Activated B cell treated with CpG ODN at 0.5 μM for 24 hours (primary cell): ENCODE measurements at regions of chr12 and their contacts with region 1.

Region 1: DNA sequence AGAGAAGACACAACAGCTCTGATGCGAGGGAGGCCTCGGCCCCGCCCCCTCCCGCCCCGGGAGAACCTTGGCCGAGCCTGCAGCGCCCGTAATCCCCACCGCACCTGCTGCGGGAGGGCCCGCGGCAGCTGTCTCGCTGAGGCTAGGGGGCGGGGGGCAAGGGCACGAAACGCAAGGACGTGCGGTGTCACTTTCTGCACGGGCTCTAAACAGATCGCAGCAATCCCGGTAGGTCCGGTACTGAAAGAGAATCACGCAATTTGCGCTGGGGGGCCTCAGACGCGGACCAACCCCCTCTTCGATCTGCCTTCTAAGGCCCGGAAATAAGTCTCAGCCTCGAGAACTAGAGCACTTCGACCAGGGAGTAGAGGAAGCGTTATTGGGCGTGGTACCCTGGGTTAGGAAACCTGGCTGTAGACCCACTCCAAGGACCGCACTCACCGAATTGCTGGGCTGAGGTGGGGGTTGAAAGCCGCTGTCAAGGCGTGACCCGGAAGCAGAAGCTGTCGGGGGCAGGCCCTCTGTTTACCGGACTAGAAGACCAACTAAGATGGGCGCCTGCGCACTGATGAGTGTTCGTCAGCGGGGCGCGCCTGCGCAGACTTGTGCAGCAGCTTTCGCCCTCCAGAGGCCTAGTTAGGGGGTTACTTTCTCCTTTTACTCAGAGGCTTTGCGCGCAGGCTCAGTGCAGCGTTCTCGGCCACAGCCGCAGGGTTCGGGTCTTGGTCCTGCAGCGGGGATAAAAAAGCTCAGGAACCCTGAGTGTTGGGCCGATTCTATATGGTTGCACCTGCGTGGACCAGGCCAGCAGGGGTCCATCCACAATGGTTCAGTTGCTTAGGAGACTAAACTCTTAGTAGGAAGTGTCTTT is at the start of gene ASB8:
- DNase-seq: peak; percentile 96
- ATAC-seq: peak; percentile 93
- H3K4me3 Mint-ChIP-seq: peak within 1 kb of the TSS; percentile 96
- H3K27ac Mint-ChIP-seq: peak within 1 kb of the TSS; percentile 97
- H3K4me1 Mint-ChIP-seq: peaks cover 26% of the 10 kb centered on the region
- H3K27me3 Mint-ChIP-seq: peaks cover 2% of the 10 kb centered on the region
- CTCF ChIP-seq: no peak
- total RNA-seq, gene ASB8: 40.0 and 43.6 TPM in 2 replicates

Region 2: DNA sequence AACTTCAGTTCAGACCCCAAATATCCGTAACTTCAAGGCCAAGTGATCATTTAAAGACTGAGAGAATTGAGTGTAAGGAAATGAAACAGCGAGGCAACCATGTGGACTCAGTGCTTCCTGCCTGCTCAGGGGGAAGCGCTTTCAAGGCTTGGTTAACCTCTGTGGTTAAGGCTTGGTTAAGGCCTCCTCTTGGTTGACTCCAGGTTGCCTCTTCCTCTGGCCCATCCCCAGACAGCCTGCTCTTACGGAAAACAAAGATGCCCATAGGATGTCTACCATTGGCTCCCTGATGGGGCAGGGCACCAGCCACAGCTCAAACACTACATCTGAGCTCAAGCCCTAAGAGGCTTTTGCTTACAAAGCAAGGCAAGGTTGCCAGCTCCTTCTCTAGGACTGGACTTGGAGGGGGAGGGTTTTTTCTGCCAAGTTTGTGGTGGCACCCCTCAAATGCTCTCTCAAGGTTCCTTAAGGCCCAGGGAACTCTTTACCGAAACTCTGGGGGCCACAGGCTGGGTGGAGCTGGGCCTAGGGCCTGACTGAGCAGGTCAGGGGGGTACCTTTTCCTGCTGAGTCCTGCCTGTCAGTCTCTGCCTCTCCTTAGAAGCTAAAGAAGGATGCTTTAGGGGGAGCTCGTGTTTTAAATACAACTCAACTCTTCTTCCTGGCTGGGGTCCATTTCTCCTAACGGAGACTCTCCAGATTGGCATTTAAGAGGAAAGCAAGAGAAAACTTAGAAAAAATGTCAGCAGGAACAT is 166.7 kb before region 1 on chr12:
- CTCF ChIA-PET with region 1: no interaction called
- POLR2A ChIA-PET with region 1: no interaction called
- intact Hi-C with region 1: loop called (anchors 1 kb)
- DNase-seq: peak; percentile 29
- ATAC-seq: peak; percentile 99
- H3K4me3 Mint-ChIP-seq: no peak overlapping the region
- H3K27ac Mint-ChIP-seq: peak overlapping the region; percentile 78
- H3K4me1 Mint-ChIP-seq: peaks cover 34% of the 10 kb centered on the region
- H3K27me3 Mint-ChIP-seq: peaks cover 17% of the 10 kb centered on the region
- CTCF ChIP-seq: no peak

Region 3: GRCh38 chr12:48119078-48119833 is 38.0 kb before region 1 on chr12 and contains the start of gene PFKM:
- CTCF ChIA-PET with region 1: interaction called, 3 read pairs
- POLR2A ChIA-PET with region 1: interaction called, 7 read pairs
- intact Hi-C with region 1: loop called (anchors 1 kb)
- DNase-seq: peak; percentile 43
- ATAC-seq: peak; percentile 97
- H3K4me3 Mint-ChIP-seq: peak within 1 kb of the TSS; percentile 99
- H3K27ac Mint-ChIP-seq: peak within 1 kb of the TSS; percentile 87
- H3K4me1 Mint-ChIP-seq: peaks cover 21% of the 10 kb centered on the region
- H3K27me3 Mint-ChIP-seq: no peaks in the 10 kb centered on the region
- CTCF ChIP-seq: no peak
- total RNA-seq, gene PFKM: 44.7 and 49.2 TPM in 2 replicates

Region 4: DNA sequence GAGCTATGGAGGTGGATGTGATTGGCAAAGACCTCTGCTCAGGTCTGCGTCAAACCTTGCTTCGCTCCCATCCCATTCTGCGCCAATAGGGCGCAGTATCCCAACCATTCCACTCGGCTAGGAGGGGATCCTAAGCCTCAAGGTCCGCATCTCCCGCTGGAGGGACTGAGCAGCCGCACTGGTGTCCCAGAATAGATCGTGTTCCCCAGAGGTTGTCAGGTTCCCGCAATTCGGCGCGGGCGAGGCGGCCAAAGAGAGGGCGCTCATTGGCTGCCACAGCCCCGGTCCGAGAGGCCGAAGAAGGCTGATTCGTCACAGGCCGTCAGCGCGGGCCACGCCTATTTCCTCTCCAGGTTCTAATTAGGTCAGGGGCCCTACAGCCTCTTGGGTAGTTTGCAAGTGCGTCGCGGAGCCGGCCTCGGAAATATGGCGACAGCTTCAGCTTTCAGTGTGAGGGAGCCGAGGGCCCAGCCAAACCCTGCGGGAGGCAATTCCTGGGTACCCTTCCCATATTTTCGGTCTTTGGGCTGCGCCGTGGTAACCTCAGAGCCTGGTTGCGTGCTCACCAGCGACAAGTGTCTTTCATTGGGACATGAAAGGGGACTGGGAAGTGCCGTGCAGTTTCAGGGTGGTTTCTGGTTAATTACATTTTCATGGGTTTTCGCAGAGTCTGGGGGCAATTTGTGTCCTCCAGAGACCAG is 40.9 kb after region 1 on chr12:
- CTCF ChIA-PET with region 1: interaction called, 3 read pairs
- POLR2A ChIA-PET with region 1: interaction called, 28 read pairs
- intact Hi-C with region 1: loop called (anchors 1 kb)
- DNase-seq: peak; percentile 84
- ATAC-seq: peak; percentile 98
- H3K4me3 Mint-ChIP-seq: peak overlapping the region; percentile 96
- H3K27ac Mint-ChIP-seq: peak overlapping the region; percentile 99
- H3K4me1 Mint-ChIP-seq: peaks cover 26% of the 10 kb centered on the region
- H3K27me3 Mint-ChIP-seq: peaks cover 17% of the 10 kb centered on the region
- CTCF ChIP-seq: no peak

Region 5: GRCh38 chr12:48216785-48217184 is 59.5 kb after region 1 on chr12:
- CTCF ChIA-PET with region 1: no interaction called
- POLR2A ChIA-PET with region 1: no interaction called
- intact Hi-C with region 1: no loop called
- DNase-seq: no peak
- ATAC-seq: no peak
- H3K4me3 Mint-ChIP-seq: no peak overlapping the region
- H3K27ac Mint-ChIP-seq: no peak overlapping the region
- H3K4me1 Mint-ChIP-seq: peaks cover 10% of the 10 kb centered on the region
- H3K27me3 Mint-ChIP-seq: peaks cover 6% of the 10 kb centered on the region
- CTCF ChIP-seq: no peak

Region 6: GRCh38 chr12:48716493-48717251 is 559.4 kb after region 1 on chr12 and contains the start of gene CCNT1:
- CTCF ChIA-PET with region 1: no interaction called
- POLR2A ChIA-PET with region 1: no interaction called
- intact Hi-C with region 1: loop called (anchors 2 kb)
- DNase-seq: peak; percentile 92
- ATAC-seq: peak; percentile 91
- H3K4me3 Mint-ChIP-seq: peak within 1 kb of the TSS; percentile 87
- H3K27ac Mint-ChIP-seq: peak within 1 kb of the TSS; percentile 97
- H3K4me1 Mint-ChIP-seq: peaks cover 39% of the 10 kb centered on the region
- H3K27me3 Mint-ChIP-seq: peaks cover 2% of the 10 kb centered on the region
- CTCF ChIP-seq: no peak
- total RNA-seq, gene CCNT1: 48.9 and 49.6 TPM in 2 replicates